Tibial artery (tissue), 4 donors: ENCODE measurements at regions of chr16 and their contacts with region 1.

Region 1: DNA sequence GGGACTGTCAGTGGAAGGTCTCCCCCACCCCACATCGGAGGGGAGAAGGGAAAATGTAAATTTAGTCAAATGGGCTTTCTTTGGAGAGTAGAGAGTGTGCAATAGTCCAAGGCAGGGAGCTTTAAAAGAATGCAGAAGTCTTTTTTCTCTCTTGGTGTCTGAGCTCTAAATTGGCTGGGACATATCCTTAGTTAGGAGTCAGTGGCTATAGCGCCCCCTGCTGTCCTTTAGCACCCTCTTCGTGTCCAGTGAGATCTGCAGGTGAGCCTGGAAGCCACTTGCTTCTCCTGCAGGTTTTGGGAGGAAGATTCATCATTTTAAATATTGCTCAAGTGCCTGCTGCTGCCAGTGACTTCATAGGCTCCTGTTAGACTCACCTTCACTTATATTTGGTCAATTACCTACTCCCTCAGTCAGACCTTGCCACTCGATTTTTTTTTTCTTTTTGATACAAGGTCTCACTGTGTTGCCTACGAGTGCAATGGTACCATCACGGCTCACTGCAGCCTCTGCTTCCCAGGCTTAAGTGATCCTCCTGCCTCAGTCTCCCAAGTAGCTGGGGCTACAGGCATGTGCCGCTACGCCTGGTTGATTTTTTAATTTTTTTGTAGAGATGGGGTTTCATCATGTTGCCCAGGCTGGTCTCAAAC is 174.8 kb downstream of the PRKCB start:
- DNase-seq: peak; percentile 69 to 75
- H3K4me3 ChIP-seq: no peak overlapping the region
- H3K27ac ChIP-seq: no peak overlapping the region
- H3K4me1 ChIP-seq: no peaks in the 10 kb centered on the region
- H3K27me3 ChIP-seq: peaks cover 0 to 8% of the 10 kb centered on the region in 2 donors
- CTCF ChIP-seq: peak; percentile 62

Region 2: DNA sequence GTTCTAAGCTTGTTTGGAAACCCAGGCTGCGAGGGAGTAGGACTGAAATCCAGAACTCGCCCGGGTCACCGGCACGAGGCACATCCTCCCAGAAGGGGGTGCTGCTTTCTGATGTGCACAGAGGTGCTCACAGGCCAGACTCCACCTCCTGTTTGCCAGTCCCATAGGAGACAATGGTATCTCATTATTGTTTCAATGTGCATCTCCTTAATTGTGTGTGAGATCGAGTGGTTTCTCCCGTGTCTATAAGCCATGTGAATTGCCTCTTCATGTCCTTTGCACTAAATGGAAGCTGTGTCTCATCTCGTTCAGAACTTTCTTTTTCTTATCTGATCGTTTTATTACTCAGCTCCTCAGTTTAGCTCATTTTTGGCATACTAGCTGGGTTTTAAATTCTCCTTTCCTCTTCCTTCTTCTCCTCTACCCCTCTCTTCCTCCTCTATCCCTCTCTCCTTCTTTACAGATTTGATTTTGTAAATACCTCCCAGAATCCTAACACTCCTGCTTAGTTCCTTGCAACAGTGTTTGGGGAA is 206.9 kb before region 1 on chr16:
- intact Hi-C with region 1: loop called (anchors 5 kb)
- DNase-seq: peak in 1 of 2 donors; percentile 48
- H3K4me3 ChIP-seq: no peak overlapping the region
- H3K27ac ChIP-seq: no peak overlapping the region
- H3K4me1 ChIP-seq: peaks cover 0 to 10% (median 0%) of the 10 kb centered on the region in 4 donors
- H3K27me3 ChIP-seq: peaks cover 0 to 6% of the 10 kb centered on the region in 2 donors
- CTCF ChIP-seq: peak in 1 of 2 experiments; percentile 28

Region 3: DNA sequence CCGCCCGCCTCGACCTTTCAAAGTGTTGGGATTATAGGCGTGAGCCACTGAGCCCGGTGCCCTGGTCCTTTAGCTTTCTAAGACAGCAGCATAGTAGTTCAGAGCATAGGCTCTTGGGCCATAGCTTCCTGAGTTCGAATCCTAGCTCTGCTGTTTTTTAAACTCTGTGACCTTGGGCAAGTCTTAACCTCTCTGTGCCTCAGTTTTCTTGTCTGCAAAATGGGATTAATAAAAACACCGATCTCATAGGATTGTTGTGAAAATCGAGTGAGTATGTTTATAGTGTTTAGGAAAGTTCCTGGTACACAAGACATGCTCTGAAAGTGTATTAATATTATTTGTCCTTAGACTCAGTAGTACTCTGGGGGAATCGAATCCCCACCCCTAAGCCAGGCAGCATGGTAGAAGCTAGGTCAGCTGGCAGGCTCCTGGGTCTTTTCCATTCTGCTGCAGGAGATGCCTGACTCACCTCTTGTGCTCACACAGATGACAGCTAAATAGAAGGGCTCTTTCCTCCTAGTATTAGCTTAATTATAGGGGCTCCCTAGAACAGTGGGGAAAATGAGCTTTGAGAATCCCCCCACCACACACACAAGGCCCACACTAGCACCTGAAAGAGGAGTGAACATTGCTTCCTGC is 130.7 kb before region 1 on chr16:
- intact Hi-C with region 1: loop called (anchors 10 kb)
- DNase-seq: no peak
- H3K4me3 ChIP-seq: no peak overlapping the region
- H3K27ac ChIP-seq: no peak overlapping the region
- H3K4me1 ChIP-seq: no peaks in the 10 kb centered on the region
- H3K27me3 ChIP-seq: no peaks in the 10 kb centered on the region
- CTCF ChIP-seq: no peak